Activated CD8-positive, alpha-beta memory T cell treated with anti-CD3 and anti-CD28 coated beads, Interleukin-2, amount 10 ng/mL, durations not matched to agents 7 days and 5 days (primary cell): ENCODE measurements at regions of chr2 and their contacts with region 1.

Region 1: GRCh38 chr2:8324164-8324856 is 357.5 kb upstream of the ID2 start:
- DNase-seq: no peak
- ATAC-seq: peak; percentile 30
- H3K4me3 Mint-ChIP-seq: no peak overlapping the region
- H3K27ac Mint-ChIP-seq: peak overlapping the region; percentile 14
- H3K4me1 Mint-ChIP-seq: peaks cover 45% of the 10 kb centered on the region
- H3K27me3 Mint-ChIP-seq: peaks cover 15% of the 10 kb centered on the region

Region 2: GRCh38 chr2:8296306-8296705 is 28.0 kb before region 1 on chr2:
- CTCF ChIA-PET with region 1: no interaction called
- DNase-seq: no peak
- ATAC-seq: no peak
- H3K4me3 Mint-ChIP-seq: no peak overlapping the region
- H3K27ac Mint-ChIP-seq: no peak overlapping the region
- H3K4me1 Mint-ChIP-seq: peaks cover 35% of the 10 kb centered on the region
- H3K27me3 Mint-ChIP-seq: peaks cover 21% of the 10 kb centered on the region

Region 3: GRCh38 chr2:8312861-8313830 is 11.2 kb before region 1 on chr2:
- CTCF ChIA-PET with region 1: interaction called, 12 read pairs
- DNase-seq: peak; percentile 53
- ATAC-seq: peak; percentile 60
- H3K4me3 Mint-ChIP-seq: peak overlapping the region; percentile 72
- H3K27ac Mint-ChIP-seq: peak overlapping the region; percentile 88
- H3K4me1 Mint-ChIP-seq: peaks cover 76% of the 10 kb centered on the region
- H3K27me3 Mint-ChIP-seq: peaks cover 3% of the 10 kb centered on the region

Region 4: GRCh38 chr2:8337321-8337720 is 13.0 kb after region 1 on chr2:
- CTCF ChIA-PET with region 1: interaction called, 11 read pairs
- DNase-seq: peak; percentile 72
- ATAC-seq: peak; percentile 97
- H3K4me3 Mint-ChIP-seq: peak overlapping the region; percentile 11
- H3K27ac Mint-ChIP-seq: peak overlapping the region; percentile 85
- H3K4me1 Mint-ChIP-seq: peaks cover 39% of the 10 kb centered on the region
- H3K27me3 Mint-ChIP-seq: no peaks in the 10 kb centered on the region

Region 5: DNA sequence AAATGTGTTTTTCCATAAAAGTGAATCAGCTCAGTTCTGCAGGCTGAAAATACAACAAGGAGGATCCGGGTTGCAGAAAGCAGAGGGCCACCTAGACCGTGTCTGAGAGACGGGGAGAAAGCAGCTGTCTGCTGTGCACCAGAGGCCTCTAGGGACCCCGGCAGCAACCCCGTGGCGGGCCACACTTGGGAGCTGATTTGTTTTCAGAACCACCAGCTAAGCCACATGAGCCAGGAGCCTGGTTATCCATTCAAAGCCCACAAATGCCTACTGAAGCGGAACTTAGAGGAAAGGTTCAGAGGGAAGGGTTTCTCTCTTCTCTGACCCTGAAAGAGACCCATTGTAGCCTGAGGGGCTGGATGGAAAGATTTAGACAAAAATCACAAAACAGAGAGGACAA is 329.2 kb after region 1 on chr2:
- CTCF ChIA-PET with region 1: no interaction called
- DNase-seq: no peak
- ATAC-seq: no peak
- H3K4me3 Mint-ChIP-seq: no peak overlapping the region
- H3K27ac Mint-ChIP-seq: no peak overlapping the region
- H3K4me1 Mint-ChIP-seq: peaks cover 10% of the 10 kb centered on the region
- H3K27me3 Mint-ChIP-seq: peaks cover 19% of the 10 kb centered on the region